Transverse colon (tissue), 4 donors: ENCODE measurements at regions of chr6 and their contacts with region 1.

Region 1: DNA sequence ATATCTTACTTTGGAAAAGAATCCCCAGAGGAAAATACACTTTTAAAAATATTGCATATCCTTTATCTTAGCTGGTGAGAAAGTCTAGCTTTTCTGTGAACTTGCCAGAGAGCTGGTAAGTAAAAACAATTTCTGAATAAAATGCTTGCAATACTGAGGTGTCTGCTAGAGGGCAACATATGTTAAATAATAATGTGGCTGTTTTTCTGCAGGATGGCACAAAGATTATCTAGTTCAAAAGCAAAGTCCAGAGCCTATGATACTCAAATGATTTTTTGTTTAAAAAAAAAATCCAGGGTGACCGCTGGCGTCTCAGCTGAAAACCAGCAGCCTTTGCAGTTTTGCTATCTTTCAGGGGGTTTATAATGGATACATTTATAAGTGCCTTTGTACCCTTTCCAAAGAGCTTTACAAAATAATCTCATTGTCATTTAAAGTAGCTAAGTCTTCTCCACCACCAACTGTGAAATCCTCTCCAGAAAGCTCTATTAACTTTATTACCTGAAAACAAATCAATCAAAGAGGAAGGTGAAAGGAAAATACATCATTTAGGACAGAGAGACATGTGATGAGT is 194.9 kb downstream of the PHACTR1 start:
- DNase-seq: no peak
- H3K4me3 ChIP-seq: no peak overlapping the region
- H3K27ac ChIP-seq: no peak overlapping the region
- H3K4me1 ChIP-seq: no peaks in the 10 kb centered on the region
- H3K27me3 ChIP-seq: no peaks in the 10 kb centered on the region
- CTCF ChIP-seq: peak; percentile 34 to 43 (median 38)
- EP300 ChIP-seq: no peak
- POLR2A ChIP-seq: no peak

Region 2: GRCh38 chr6:12865671-12866181 is 45.7 kb before region 1 on chr6:
- in situ Hi-C with region 1: no loop called
- intact Hi-C with region 1: loop called (anchors 2 kb)
- DNase-seq: no peak
- H3K4me3 ChIP-seq: no peak overlapping the region
- H3K27ac ChIP-seq: no peak overlapping the region
- H3K4me1 ChIP-seq: no peaks in the 10 kb centered on the region
- H3K27me3 ChIP-seq: peaks cover 14% of the 10 kb centered on the region
- CTCF ChIP-seq: no peak
- EP300 ChIP-seq: no peak
- POLR2A ChIP-seq: no peak

Region 3: GRCh38 chr6:13328076-13328874 is 416.8 kb after region 1 on chr6 and contains the start of gene TBC1D7:
- in situ Hi-C with region 1: loop called in 3 of 4 experiments (anchors 10 to 25 kb)
- intact Hi-C with region 1: loop called (anchors 5 kb)
- DNase-seq: peak; percentile 95
- H3K4me3 ChIP-seq: peak within 1 kb of the TSS; percentile 55 to 98 (median 78)
- H3K27ac ChIP-seq: peak within 1 kb of the TSS; percentile 90 to 98 (median 94)
- H3K4me1 ChIP-seq: peaks cover 6 to 18% (median 13%) of the 10 kb centered on the region in 4 donors
- H3K27me3 ChIP-seq: no peaks in the 10 kb centered on the region
- CTCF ChIP-seq: peak in 4 of 5 experiments; percentile 16 to 60 (median 27)
- EP300 ChIP-seq: no peak
- POLR2A ChIP-seq: peak; percentile 94
- total RNA-seq, gene TBC1D7: 10.5 to 39.8 (median 15.0) TPM

Region 4: DNA sequence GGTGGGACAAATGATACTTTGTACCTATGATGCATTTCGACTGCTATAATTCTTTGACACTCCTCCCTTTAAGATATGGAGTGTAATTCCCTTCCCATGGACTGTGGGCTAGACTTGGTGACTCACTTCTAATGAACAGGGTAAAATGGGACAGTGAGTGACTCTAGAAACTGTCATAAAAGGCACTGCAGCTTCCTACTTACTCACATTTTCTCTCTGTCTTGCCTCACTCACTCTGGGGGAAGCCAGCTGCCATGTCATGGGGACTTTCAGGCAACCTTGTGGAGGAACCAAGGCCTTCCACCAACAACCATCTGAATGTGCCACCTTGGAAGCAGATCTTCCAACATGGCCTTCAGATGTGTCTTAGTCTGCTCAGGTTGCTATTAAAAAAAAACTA is 588.8 kb after region 1 on chr6:
- in situ Hi-C with region 1: no loop called
- intact Hi-C with region 1: no loop called
- DNase-seq: peak; percentile 38
- H3K4me3 ChIP-seq: no peak overlapping the region
- H3K27ac ChIP-seq: peak overlapping the region; percentile 71 to 83 (median 77)
- H3K4me1 ChIP-seq: peaks cover 0 to 10% (median 0%) of the 10 kb centered on the region in 4 donors
- H3K27me3 ChIP-seq: no peaks in the 10 kb centered on the region
- CTCF ChIP-seq: no peak
- EP300 ChIP-seq: no peak
- POLR2A ChIP-seq: peak; percentile 62